Naive thymus-derived CD4-positive, alpha-beta T cell (primary cell): ENCODE measurements at regions of chr2 and their contacts with region 1.

Region 1: DNA sequence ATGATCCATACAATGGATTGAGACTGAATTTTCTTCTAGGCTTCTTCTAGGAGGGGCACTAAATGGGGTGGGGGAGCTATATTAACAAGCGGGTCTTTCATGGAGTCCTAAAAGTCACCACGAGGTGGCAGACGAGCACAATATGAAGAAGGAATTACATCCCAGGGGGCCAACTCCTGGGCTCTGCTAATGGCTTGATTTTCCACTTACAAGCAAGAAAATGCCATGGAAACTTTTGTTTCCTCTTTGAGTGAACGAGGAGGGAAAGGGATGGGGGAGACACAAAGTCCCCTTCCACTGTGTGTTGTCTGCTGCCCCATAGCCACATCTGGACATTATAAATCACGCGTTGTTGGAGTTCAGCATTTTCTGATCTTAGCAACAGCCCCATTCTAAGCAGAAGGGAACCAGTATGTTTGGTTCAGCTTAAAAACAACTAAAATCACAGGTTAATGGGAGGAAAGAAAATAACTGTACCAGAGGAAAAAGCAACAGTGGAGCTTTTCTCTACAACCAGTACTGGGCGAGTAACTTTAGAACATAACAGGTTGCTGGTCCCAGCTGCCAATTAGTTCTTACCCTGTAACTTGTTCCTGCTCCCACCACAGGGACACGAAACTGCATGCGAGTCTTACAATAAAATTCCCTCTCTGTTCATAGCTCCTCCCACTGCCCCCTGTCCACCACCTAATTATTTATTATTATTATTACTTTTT is 285.0 kb upstream of the PARD3B start:
- DNase-seq: peak in 6 of 9 donors; percentile 30 to 47 (median 36)
- ATAC-seq: peak; percentile 60
- H3K4me3 ChIP-seq: no peak overlapping the region
- H3K4me3 Mint-ChIP-seq: no peak overlapping the region
- H3K27ac ChIP-seq: no peak overlapping the region
- H3K27ac Mint-ChIP-seq: no peak overlapping the region
- H3K4me1 ChIP-seq: no peaks in the 10 kb centered on the region
- H3K4me1 Mint-ChIP-seq: peaks cover 0 to 2% (median 0%) of the 10 kb centered on the region in 7 donors
- H3K27me3 ChIP-seq: peaks cover 2 to 3% of the 10 kb centered on the region in 2 donors
- H3K27me3 Mint-ChIP-seq: peaks cover 20 to 58% (median 26%) of the 10 kb centered on the region in 5 donors

Region 2: GRCh38 chr2:204538182-204539018 is 278.1 kb after region 1 on chr2:
- CTCF ChIA-PET with region 1: no interaction called
- POLR2A ChIA-PET with region 1: no interaction called
- intact Hi-C with region 1: no loop called
- DNase-seq: no peak
- ATAC-seq: no peak
- H3K4me3 ChIP-seq: no peak overlapping the region
- H3K4me3 Mint-ChIP-seq: no peak overlapping the region
- H3K27ac ChIP-seq: no peak overlapping the region
- H3K27ac Mint-ChIP-seq: no peak overlapping the region
- H3K4me1 ChIP-seq: no peaks in the 10 kb centered on the region
- H3K4me1 Mint-ChIP-seq: no peaks in the 10 kb centered on the region
- H3K27me3 ChIP-seq: no peaks in the 10 kb centered on the region
- H3K27me3 Mint-ChIP-seq: peaks cover 6 to 18% (median 16%) of the 10 kb centered on the region in 5 donors

Region 3: DNA sequence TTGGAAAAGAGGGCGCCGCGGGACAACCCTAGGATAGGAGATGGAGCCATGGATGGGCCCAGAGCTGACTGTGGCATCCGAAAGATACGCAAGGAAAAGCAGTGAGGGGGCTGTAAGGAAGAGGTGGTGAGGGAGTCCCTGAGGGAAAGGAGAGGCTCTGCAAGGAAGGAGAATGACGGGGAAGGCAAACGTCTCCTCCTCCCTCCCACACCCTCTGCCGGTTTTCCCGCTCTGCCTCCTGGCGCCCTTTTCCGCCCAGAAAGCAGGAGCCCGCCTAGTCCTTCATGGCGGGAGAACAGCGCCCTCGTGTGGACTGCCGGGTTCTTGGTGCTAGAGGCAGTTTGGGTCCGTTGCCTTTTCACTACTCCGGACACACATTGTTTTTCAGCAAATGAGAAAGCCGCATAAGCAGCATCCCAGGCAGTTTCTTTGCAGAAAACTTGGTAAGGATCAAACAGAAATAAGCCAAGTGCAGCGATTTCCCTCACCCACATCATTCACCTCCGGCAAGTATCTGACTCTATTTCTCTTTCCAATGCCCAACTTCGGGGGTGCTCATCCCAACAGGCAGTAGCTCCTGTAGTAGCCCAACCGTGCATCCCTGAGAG is 1625.3 kb after region 1 on chr2:
- CTCF ChIA-PET with region 1: no interaction called
- POLR2A ChIA-PET with region 1: no interaction called
- intact Hi-C with region 1: loop called (anchors 1 to 10 kb)
- DNase-seq: peak in 8 of 9 donors; percentile 6 to 76 (median 30)
- ATAC-seq: no peak
- H3K4me3 ChIP-seq: no peak overlapping the region
- H3K4me3 Mint-ChIP-seq: no peak overlapping the region
- H3K27ac ChIP-seq: no peak overlapping the region
- H3K27ac Mint-ChIP-seq: no peak overlapping the region
- H3K4me1 ChIP-seq: no peaks in the 10 kb centered on the region
- H3K4me1 Mint-ChIP-seq: peaks cover 0 to 6% (median 0%) of the 10 kb centered on the region in 7 donors
- H3K27me3 ChIP-seq: no peaks in the 10 kb centered on the region
- H3K27me3 Mint-ChIP-seq: peaks cover 14 to 40% (median 24%) of the 10 kb centered on the region in 5 donors

Region 4: GRCh38 chr2:205925373-205926337 is 1665.3 kb after region 1 on chr2:
- CTCF ChIA-PET with region 1: no interaction called
- POLR2A ChIA-PET with region 1: no interaction called
- intact Hi-C with region 1: loop called in 1 of 2 experiments (anchors 5 kb)
- DNase-seq: peak; percentile 23 to 79 (median 61)
- ATAC-seq: peak; percentile 81
- H3K4me3 ChIP-seq: no peak overlapping the region
- H3K4me3 Mint-ChIP-seq: peak overlapping the region in 6 of 10 donors; percentile 9 to 62 (median 60)
- H3K27ac ChIP-seq: no peak overlapping the region
- H3K27ac Mint-ChIP-seq: peak overlapping the region in 1 of 9 donors; percentile 21
- H3K4me1 ChIP-seq: peaks cover 0 to 5% of the 10 kb centered on the region in 2 donors
- H3K4me1 Mint-ChIP-seq: peaks cover 5 to 13% (median 9%) of the 10 kb centered on the region in 7 donors
- H3K27me3 ChIP-seq: peaks cover 0 to 4% of the 10 kb centered on the region in 2 donors
- H3K27me3 Mint-ChIP-seq: peaks cover 40 to 58% (median 50%) of the 10 kb centered on the region in 5 donors

Region 5: DNA sequence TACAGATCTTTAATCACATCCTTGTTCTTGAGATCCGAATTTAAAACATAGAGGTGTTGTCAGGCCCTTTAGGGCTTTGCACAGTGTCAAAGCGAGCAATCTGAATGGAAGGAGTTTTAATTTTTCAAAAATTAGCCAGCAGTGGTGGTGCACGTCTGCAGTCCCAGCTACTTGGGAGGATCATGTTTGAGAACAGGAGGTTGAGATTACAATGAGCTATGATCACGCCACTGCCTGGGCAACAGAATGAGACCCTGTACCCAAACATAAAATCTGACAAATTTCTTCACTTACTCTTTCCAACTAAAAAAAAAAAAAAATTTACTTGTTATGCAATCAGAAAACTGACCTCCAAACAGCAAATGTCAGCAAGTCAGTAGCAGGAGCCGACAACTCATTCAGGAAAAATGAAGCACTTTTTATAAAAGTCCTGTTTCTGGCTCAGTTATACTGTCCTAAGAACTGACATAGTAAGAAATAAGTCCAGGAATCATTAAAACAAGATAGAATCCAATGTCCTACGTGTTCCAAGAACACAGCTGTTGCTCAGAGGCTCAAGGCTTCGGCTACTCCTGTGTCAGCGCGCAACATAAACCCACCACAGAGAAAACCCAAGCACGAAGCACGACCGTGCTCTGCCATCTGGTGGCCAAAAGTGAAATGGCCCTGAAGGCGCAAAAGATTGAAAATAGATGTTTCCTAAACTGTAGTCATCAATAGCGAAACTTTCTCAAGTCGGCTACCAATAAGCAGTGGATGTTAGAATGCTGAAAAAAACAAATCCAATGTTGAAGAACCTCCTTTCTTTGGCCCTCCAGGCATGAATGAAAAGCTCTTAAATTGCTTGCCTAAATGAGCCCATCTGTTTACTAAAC is 1687.5 kb after region 1 on chr2:
- CTCF ChIA-PET with region 1: interaction called, 4 read pairs
- POLR2A ChIA-PET with region 1: no interaction called
- intact Hi-C with region 1: loop called in 1 of 2 experiments (anchors 1 kb)
- DNase-seq: peak in 8 of 9 donors; percentile 12 to 53 (median 28)
- ATAC-seq: peak; percentile 71
- H3K4me3 ChIP-seq: no peak overlapping the region
- H3K4me3 Mint-ChIP-seq: peak overlapping the region in 1 of 10 donors; percentile 13
- H3K27ac ChIP-seq: no peak overlapping the region
- H3K27ac Mint-ChIP-seq: no peak overlapping the region
- H3K4me1 ChIP-seq: no peaks in the 10 kb centered on the region
- H3K4me1 Mint-ChIP-seq: peaks cover 0 to 4% (median 3%) of the 10 kb centered on the region in 7 donors
- H3K27me3 ChIP-seq: no peaks in the 10 kb centered on the region
- H3K27me3 Mint-ChIP-seq: peaks cover 0 to 25% (median 9%) of the 10 kb centered on the region in 5 donors